Heart left ventricle (tissue), 16 donors: ENCODE measurements at regions of chr2 and their contacts with region 1.

Region 1: GRCh38 chr2:178128836-178129630 is 16.8 kb downstream of the RBM45 start:
- DNase-seq: no peak
- ATAC-seq: no peak
- H3K4me3 ChIP-seq: no peak overlapping the region
- H3K27ac ChIP-seq: no peak overlapping the region
- H3K4me1 ChIP-seq: peaks cover 0 to 4% (median 0%) of the 10 kb centered on the region in 12 donors
- H3K27me3 ChIP-seq: no peaks in the 10 kb centered on the region
- CTCF ChIP-seq: no peak
- POLR2A ChIP-seq: no peak

Region 2: DNA sequence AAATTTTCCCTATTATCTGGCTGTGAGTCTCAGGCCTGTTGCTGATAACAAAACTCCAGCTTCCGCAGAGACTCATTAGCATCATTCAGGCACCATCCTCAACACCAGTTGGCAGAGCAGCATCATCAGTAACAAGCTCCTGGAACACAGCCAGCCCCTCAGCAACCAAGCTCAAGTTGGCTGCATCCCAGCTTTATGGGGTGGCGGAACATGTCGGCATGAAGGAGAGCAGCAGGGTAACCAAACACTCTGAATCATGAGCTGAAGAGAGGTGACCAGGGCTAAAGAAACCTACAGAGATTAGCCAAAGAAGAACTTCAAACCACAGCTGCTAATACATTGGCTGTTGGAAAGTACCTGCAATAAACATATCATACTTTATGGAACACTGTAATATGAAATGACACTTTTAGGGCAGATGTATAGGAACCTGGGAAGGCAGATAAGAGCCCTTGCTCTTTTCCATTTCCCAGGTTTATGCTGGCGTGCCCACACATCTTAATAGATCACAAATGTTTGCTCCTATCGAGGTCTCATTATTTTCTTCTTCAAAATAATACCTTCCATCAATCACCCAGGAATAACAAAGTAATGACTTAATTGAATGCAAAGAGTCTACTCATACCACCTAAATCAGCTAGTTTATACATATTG is 120.3 kb before region 1 on chr2:
- intact Hi-C with region 1: no loop called
- DNase-seq: peak; percentile 44 to 68 (median 57)
- ATAC-seq: peak in 3 of 4 donors; percentile 44 to 64 (median 45)
- H3K4me3 ChIP-seq: no peak overlapping the region
- H3K27ac ChIP-seq: no peak overlapping the region
- H3K4me1 ChIP-seq: no peaks in the 10 kb centered on the region
- H3K27me3 ChIP-seq: no peaks in the 10 kb centered on the region
- CTCF ChIP-seq: no peak
- POLR2A ChIP-seq: no peak

Region 3: DNA sequence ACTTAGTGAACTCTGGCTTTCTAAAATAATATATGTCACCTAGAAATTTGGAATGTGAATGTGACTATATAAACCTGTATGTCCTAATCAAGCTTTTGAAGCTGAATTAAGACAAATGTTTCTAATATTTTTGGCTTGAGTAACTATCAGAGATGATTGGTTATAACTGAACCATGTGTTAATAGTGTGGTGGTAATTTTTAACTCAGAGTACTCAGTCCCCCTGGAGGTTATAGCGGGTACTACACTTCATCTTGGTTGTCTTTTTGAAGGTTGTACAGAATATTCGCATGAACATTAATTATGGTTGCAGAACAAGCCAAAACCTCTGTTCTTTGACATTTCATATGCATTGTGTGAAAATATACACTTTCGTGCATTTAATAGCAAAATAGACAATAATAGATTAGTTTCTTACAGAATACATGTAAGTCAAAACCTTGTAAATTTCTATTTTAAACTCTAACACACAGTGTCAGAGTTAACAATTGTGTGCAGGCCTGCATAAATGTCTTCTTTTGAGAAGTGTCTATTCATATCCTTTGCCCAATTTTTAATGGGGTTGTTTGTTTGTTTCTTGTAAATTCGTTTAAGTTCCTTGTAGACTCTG is 151.3 kb after region 1 on chr2:
- intact Hi-C with region 1: loop called (anchors 2 to 5 kb)
- DNase-seq: peak in 2 of 5 donors; percentile 21 to 27
- ATAC-seq: peak in 3 of 4 donors; percentile 44 to 58 (median 57)
- H3K4me3 ChIP-seq: no peak overlapping the region
- H3K27ac ChIP-seq: no peak overlapping the region
- H3K4me1 ChIP-seq: peaks cover 0 to 13% (median 0%) of the 10 kb centered on the region in 12 donors
- H3K27me3 ChIP-seq: no peaks in the 10 kb centered on the region
- CTCF ChIP-seq: peak; percentile 69 to 92 (median 78)
- POLR2A ChIP-seq: no peak

Region 4: GRCh38 chr2:178420463-178420999 is 291.5 kb after region 1 on chr2:
- intact Hi-C with region 1: loop called in 3 of 10 experiments (anchors 5 to 10 kb)
- DNase-seq: no peak
- ATAC-seq: no peak
- H3K4me3 ChIP-seq: no peak overlapping the region
- H3K27ac ChIP-seq: no peak overlapping the region
- H3K4me1 ChIP-seq: peaks cover 0 to 9% (median 0%) of the 10 kb centered on the region in 12 donors
- H3K27me3 ChIP-seq: no peaks in the 10 kb centered on the region
- CTCF ChIP-seq: no peak
- POLR2A ChIP-seq: no peak